ENCODE measurements at regions of chr5 and their contacts with region 1.

Region 1: GRCh38 chr5:150075871-150076288 is 10.5 kb downstream of the CSF1R start:
- DNase-seq: peak in 1 of 3 donors; percentile 39
- H3K4me3 ChIP-seq: no peak overlapping the region
- H3K27ac ChIP-seq: no peak overlapping the region
- H3K4me1 ChIP-seq: peaks cover 4 to 31% (median 21%) of the 10 kb centered on the region in 4 experiments
- H3K27me3 ChIP-seq: no peaks in the 10 kb centered on the region

Region 2: GRCh38 chr5:150058480-150059126 is 17.3 kb before region 1 on chr5:
- CTCF ChIA-PET with region 1: interaction called, 14 read pairs
- POLR2A ChIA-PET with region 1: interaction called, 3 read pairs
- DNase-seq: peak; percentile 49 to 85 (median 85)
- H3K4me3 ChIP-seq: no peak overlapping the region
- H3K27ac ChIP-seq: no peak overlapping the region
- H3K4me1 ChIP-seq: peaks cover 0 to 45% (median 31%) of the 10 kb centered on the region in 4 experiments
- H3K27me3 ChIP-seq: no peaks in the 10 kb centered on the region

Measured in common myeloid progenitor, CD34-positive (primary cell).